ENCODE measurements at regions of chr5 and their contacts with region 1.

Region 1: DNA sequence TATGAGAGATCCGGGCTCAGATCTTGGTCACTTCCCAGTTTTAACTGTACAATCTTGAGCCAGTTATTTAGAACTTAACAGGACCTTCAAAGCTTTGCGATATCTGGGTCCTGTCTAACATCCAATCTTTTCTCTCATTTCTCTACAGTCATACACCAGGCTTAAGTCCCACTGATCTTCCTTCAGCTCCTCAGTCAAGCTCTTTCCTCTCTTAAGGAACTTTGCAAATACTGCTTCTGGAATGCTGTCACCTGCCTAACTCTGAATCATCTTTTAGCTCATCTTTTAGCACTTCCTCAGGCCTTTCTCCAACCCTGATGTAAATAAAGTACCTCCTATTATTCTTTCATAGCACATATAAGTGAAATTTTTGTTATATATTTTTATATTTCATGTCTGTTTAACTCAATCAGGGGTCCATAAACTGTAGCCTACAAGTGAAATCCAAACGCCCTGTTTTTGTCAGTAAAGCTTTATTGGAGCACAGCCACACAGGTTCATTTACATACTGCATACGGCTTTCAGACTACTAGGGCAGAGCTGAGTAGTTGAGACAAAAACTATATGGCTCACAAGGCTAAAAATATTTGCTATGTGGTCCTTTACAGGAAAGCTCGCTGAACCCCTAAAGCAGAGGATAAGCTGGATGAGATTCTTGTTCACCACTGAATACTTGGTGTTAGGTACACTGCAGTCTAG is 63.5 kb downstream of the MEF2C start:
- DNase-seq: no peak
- ATAC-seq: peak; percentile 67
- H3K4me3 Mint-ChIP-seq: peak overlapping the region; percentile 80
- H3K27ac Mint-ChIP-seq: peak overlapping the region; percentile 91
- H3K4me1 Mint-ChIP-seq: peaks cover 87% of the 10 kb centered on the region
- H3K27me3 Mint-ChIP-seq: no peaks in the 10 kb centered on the region
- CTCF ChIP-seq: no peak

Region 2: DNA sequence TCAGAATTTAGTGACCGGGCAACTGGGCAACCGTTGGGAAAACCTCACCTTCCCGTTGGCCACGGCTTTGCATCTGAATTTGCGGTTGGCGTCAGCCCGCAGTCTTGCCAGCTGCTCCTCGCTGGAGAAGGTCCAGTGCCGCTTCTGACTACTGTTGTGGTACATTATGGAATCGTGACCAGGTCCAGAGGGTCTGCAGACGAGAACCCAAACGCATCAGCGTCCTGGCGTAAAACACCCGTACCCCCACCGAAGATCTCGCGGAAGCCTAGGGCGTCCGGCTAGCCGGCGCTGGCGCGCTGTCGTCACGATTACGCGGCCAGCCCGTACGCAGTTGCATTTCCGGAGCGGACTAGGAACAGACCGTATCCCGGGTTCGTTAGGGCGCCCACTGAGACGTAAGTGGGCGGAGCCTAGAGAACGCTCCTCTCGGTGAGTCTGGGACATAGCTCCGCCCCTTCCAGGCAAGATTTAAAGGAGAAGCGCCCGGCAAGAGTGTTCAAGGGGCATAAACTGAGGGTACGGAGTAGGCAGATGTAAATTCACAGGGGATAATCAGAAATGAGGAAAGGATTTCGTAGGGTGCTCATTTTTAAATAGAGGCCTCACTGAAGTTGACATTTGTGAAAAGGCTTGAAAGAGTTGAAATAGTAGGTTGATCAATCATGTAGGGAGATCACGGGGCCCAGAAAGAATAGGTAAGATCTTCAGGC is 1406.7 kb before region 1 on chr5 and contains the start of gene CCNH:
- CTCF ChIA-PET with region 1: no interaction called
- POLR2A ChIA-PET with region 1: no interaction called
- intact Hi-C with region 1: no loop called
- DNase-seq: peak; percentile 90
- ATAC-seq: peak; percentile 99
- H3K4me3 Mint-ChIP-seq: peak within 1 kb of the TSS; percentile 91
- H3K27ac Mint-ChIP-seq: peak within 1 kb of the TSS; percentile 93
- H3K4me1 Mint-ChIP-seq: peaks cover 36% of the 10 kb centered on the region
- H3K27me3 Mint-ChIP-seq: no peaks in the 10 kb centered on the region
- CTCF ChIP-seq: no peak
- total RNA-seq, gene CCNH: 69.3 and 74.8 TPM in 2 replicates

Region 3: GRCh38 chr5:88524941-88525340 is 294.5 kb before region 1 on chr5:
- CTCF ChIA-PET with region 1: no interaction called
- POLR2A ChIA-PET with region 1: no interaction called
- intact Hi-C with region 1: no loop called
- DNase-seq: no peak
- ATAC-seq: no peak
- H3K4me3 Mint-ChIP-seq: no peak overlapping the region
- H3K27ac Mint-ChIP-seq: no peak overlapping the region
- H3K4me1 Mint-ChIP-seq: no peaks in the 10 kb centered on the region
- H3K27me3 Mint-ChIP-seq: peaks cover 6% of the 10 kb centered on the region
- CTCF ChIP-seq: no peak

Region 4: DNA sequence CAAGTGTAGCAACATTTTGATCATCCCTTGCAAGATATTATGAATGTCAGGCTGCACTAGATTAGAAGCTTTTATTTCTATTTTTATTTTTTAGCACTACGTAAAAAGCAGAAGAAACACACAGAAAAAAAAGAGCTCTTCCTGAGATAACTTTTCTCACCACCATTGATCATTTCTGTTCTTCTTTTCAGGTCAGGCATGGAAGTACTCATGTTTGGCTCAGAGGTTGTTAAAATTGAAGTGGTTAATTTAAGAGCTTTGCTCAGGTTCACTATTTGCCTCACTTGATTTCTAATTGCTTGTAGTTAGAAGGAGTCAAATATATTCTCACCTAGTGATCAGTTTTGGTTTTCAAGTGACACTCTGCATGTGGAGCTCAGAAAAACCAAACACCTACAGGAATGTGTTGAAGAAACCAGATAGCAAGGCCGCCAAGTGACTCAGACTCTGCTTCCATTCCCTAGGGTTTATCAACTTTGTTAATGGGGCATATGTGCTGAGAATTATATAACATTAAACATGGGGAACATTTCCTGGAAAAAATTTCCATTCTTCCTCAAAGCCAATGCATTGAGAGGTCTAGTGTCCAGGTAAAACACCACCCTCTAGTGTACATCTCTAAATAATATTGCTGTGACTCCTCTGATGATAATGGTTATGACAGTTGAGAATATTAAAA is 910.3 kb after region 1 on chr5:
- CTCF ChIA-PET with region 1: interaction called, 10 read pairs
- POLR2A ChIA-PET with region 1: no interaction called
- intact Hi-C with region 1: no loop called
- DNase-seq: no peak
- ATAC-seq: no peak
- H3K4me3 Mint-ChIP-seq: no peak overlapping the region
- H3K27ac Mint-ChIP-seq: peak overlapping the region; percentile 70
- H3K4me1 Mint-ChIP-seq: peaks cover 33% of the 10 kb centered on the region
- H3K27me3 Mint-ChIP-seq: no peaks in the 10 kb centered on the region
- CTCF ChIP-seq: no peak

Measured in activated B cell treated with CpG ODN at 0.5 μM for 24 hours (primary cell).